ENCODE measurements at regions of chr1 and their contacts with region 1.

Region 1: GRCh38 chr1:39672551-39672947 is 642 bp upstream of the NT5C1A start:
- DNase-seq: peak in 1 of 2 experiments; percentile 81
- H3K4me3 ChIP-seq: peak overlapping the region; percentile 27 to 61 (median 36); a peak in 5 of 8 replicates
- H3K27ac ChIP-seq: no peak overlapping the region
- H3K4me1 ChIP-seq: peaks cover 0 to 11% (median 5%) of the 10 kb centered on the region in 4 experiments; a peak in 5 of 7 replicates
- H3K27me3 ChIP-seq: peaks cover 67 to 93% (median 87%) of the 10 kb centered on the region in 4 experiments
- CTCF ChIP-seq: peak; percentile 67 to 81 (median 74)
- EP300 ChIP-seq: no peak
- POLR2A ChIP-seq: no peak
- RAD21 ChIP-seq: peak; percentile 51 to 69

Region 2: DNA sequence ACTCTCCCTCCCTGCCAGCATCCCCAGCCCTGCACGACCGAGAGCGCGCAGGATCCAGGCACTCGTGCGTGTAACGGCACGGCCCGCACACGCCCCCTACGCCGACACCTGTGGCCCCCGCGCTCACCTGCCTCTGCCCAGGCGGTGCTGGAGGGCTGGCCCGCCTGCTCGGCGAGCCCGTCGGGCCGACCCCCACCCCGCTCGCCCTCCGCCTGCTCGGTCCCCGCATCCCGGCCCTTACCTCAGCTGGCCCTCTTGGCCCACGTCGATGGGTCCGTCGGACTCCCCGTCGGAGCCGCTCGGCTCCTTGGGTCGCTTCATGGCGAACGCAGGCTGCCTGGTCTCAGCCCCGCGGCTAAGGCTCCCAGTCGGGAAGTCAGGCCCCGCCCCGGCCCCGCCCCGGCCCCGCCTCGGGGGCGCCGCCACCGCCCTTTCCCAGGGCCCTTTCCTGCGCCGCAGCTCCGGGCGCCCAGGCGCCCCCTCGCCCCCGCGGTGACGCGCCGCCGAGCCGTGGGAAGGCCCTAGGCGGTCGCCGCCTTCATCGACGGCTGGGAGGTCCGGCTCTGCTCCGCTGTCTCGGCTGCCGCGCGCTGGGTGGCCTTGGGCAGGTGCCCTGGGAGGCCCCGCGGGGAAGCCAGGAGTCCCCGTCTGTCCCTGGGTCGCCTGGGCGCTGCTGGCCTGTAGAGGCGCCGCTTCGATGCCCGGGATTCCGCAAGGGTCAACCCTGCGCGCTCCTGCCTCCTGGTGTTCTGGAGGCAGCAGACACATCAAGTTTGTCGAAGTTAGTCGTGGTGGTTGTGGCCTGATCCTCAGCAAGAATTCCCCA is 33.0 kb before region 1 on chr1 and contains the start of gene HEYL:
- CTCF ChIA-PET with region 1: interaction called, 15 read pairs
- POLR2A ChIA-PET with region 1: interaction called, 4 read pairs
- DNase-seq: peak; percentile 44 to 94
- H3K4me3 ChIP-seq: peak within 1 kb of the TSS; percentile 43 to 76 (median 54)
- H3K27ac ChIP-seq: no peak within 1 kb of the TSS
- H3K4me1 ChIP-seq: peaks cover 0 to 5% (median 0%) of the 10 kb centered on the region in 4 experiments; a peak in 1 of 7 replicates
- H3K27me3 ChIP-seq: peaks cover 4 to 48% (median 38%) of the 10 kb centered on the region in 4 experiments
- CTCF ChIP-seq: peak; percentile 70 to 97 (median 74)
- EP300 ChIP-seq: no peak
- POLR2A ChIP-seq: no peak
- RAD21 ChIP-seq: peak; percentile 36 to 63; a peak in 3 of 4 replicates
- total RNA-seq, gene HEYL: 3.1 and 3.5 TPM in 2 replicates

Region 3: DNA sequence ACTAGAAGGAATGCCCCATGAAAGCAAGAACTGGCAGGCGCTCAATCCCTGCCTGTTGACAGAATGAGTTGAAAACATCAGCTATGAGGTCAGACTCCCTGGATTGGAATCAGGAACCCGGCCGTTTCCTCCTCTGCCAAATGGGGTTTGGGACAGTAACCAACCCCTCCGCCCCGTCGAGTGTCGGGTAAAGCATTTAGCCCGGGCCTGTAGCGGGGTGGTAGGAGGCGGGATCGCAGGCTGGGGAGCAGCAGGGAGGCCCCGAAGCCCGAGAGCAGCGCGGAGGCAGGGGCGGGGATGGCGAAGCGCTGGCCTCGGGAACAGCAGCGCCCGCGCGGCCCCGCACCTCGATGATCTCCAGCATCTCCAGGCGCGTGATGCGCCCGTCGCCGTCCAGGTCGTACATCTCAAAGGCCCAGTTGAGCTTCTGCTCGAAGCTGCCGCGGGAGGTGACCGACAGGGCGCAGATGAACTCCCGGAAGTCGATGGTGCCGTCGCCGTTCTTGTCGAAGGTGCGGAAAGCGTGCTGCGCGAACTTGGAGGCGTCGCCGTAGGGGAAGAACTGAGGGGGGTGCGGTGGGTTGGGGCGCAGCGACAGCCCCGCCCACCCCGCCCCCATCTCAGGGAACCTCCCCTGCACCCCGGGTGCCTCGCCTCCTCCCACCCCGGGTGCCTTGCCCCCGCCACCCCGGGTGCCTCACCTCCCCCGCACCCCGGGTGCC is 11.2 kb after region 1 on chr1:
- CTCF ChIA-PET with region 1: interaction called, 44 read pairs
- POLR2A ChIA-PET with region 1: interaction called, 7 read pairs
- DNase-seq: peak in 1 of 2 experiments; percentile 65
- H3K4me3 ChIP-seq: peak overlapping the region in 2 of 4 experiments; percentile 10 to 50; a peak in 3 of 8 replicates
- H3K27ac ChIP-seq: no peak overlapping the region
- H3K4me1 ChIP-seq: peaks cover 0 to 5% (median 1%) of the 10 kb centered on the region in 4 experiments; a peak in 2 of 7 replicates
- H3K27me3 ChIP-seq: peaks cover 68 to 96% (median 89%) of the 10 kb centered on the region in 4 experiments
- CTCF ChIP-seq: no peak
- EP300 ChIP-seq: no peak
- POLR2A ChIP-seq: no peak
- RAD21 ChIP-seq: no peak

Region 4: GRCh38 chr1:39701049-39701439 is 28.5 kb after region 1 on chr1:
- CTCF ChIA-PET with region 1: interaction called, 57 read pairs
- POLR2A ChIA-PET with region 1: interaction called, 7 read pairs
- DNase-seq: no peak
- H3K4me3 ChIP-seq: peak overlapping the region; percentile 3 to 48 (median 22); a peak in 5 of 8 replicates
- H3K27ac ChIP-seq: no peak overlapping the region
- H3K4me1 ChIP-seq: peaks cover 0 to 17% (median 9%) of the 10 kb centered on the region in 4 experiments; a peak in 5 of 7 replicates
- H3K27me3 ChIP-seq: peaks cover 29 to 93% (median 65%) of the 10 kb centered on the region in 4 experiments
- CTCF ChIP-seq: no peak
- EP300 ChIP-seq: no peak
- POLR2A ChIP-seq: no peak
- RAD21 ChIP-seq: no peak

Region 5: GRCh38 chr1:39720094-39720999 is 47.8 kb after region 1 on chr1:
- CTCF ChIA-PET with region 1: interaction called, 78 read pairs
- POLR2A ChIA-PET with region 1: no interaction called
- DNase-seq: no peak
- H3K4me3 ChIP-seq: no peak overlapping the region
- H3K27ac ChIP-seq: no peak overlapping the region
- H3K4me1 ChIP-seq: no peaks in the 10 kb centered on the region
- H3K27me3 ChIP-seq: peaks cover 31 to 66% (median 45%) of the 10 kb centered on the region in 4 experiments
- CTCF ChIP-seq: peak in 2 of 3 experiments; percentile 29 to 44; a peak in 2 of 4 replicates
- EP300 ChIP-seq: no peak
- POLR2A ChIP-seq: no peak
- RAD21 ChIP-seq: peak; percentile 66 to 77